Ascending aorta (tissue), 2 donors: ENCODE measurements at regions of chr19 and their contacts with region 1.

Region 1: DNA sequence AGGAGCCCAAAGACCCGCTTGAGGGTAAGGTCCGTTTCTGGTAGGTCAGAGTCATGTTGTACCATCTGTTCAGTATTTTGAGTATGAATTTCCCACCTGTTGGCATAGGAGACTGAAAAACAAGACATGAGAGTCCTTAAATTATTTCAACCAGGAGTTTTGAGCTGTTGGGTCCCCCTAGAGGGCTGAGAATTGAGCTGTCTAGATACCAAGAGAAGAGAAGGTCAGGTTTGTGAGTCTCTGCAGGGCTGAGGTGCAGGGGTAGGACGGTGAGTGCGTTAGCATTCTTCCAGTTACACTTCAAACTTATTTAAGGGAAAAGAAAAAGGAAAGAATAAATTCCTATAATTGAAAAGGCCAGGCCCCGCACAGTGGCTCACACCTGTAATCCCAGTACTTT is 5.0 kb downstream of the CBLC start:
- DNase-seq: no peak
- H3K4me3 ChIP-seq: no peak overlapping the region
- H3K27ac ChIP-seq: no peak overlapping the region
- H3K4me1 ChIP-seq: peaks cover 0 to 3% of the 10 kb centered on the region in 2 donors
- H3K27me3 ChIP-seq: no peaks in the 10 kb centered on the region
- CTCF ChIP-seq: no peak

Region 2: GRCh38 chr19:44800461-44800860 is 17.7 kb after region 1 on chr19:
- intact Hi-C with region 1: loop called (anchors 1 kb)
- DNase-seq: peak; percentile 41 to 91
- H3K4me3 ChIP-seq: no peak overlapping the region
- H3K27ac ChIP-seq: no peak overlapping the region
- H3K4me1 ChIP-seq: peaks cover 4 to 9% of the 10 kb centered on the region in 2 donors
- H3K27me3 ChIP-seq: no peaks in the 10 kb centered on the region
- CTCF ChIP-seq: peak; percentile 90 to 96 (median 94)